A673 (cell line): ENCODE measurements at regions of chr15 and their contacts with region 1.

Region 1: DNA sequence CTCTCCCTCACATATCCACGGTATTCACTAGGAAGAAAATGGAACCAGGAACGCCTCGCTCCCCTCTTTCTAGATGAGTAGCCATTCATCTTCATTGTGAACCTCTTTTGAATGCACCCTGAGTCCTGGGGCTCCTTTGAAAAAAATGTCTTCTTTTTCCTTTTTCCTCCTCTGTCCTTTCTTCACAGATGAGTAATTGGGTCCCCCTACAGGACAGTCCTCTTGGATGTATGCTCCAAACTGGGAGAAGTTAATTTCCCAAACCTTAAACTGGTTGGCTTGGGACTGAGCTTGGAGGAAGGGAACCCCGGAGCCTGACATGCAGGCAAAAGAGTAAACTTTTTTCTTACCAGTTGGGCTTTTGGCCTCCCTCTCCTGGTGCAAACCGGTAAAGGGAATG is 108.8 kb downstream of the DPH6 start:
- DNase-seq: peak; percentile 16
- H3K4me3 ChIP-seq: no peak overlapping the region
- H3K27ac ChIP-seq: no peak overlapping the region
- H3K4me1 ChIP-seq: no peaks in the 10 kb centered on the region
- H3K27me3 ChIP-seq: no peaks in the 10 kb centered on the region
- CTCF ChIP-seq: peak; percentile 27; the same call in 1 of the 2 replicates

Region 2: DNA sequence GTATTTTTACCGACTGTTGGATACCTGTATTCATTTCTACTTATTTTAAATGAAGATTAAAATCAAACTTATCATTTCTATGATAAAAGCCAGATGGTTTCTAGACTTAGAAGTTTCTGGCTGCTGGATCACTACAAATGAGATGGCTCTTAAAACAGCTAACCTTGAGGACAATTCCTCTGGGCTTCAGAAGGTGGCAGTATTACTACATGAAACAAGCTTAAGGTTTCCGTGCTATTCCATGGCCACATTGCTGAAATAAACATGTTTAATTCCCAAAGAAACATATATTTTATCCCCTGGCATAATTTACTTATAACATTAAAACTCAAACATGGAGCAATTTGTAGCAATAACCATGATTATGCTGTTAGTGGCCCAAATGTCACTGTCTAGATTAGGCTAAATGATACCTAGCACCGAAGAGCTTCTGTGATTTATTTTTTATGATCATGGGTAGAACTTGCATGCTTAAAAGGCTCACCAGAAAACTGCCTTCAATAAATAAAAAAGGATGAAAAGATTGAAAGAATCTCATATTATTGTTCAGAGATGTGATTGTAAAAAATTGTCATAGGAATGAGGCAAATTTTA is 148.0 kb before region 1 on chr15:
- CTCF ChIA-PET with region 1: no interaction called
- POLR2A ChIA-PET with region 1: no interaction called
- intact Hi-C with region 1: loop called (anchors 1 kb)
- DNase-seq: peak; percentile 69
- H3K4me3 ChIP-seq: no peak overlapping the region
- H3K27ac ChIP-seq: no peak overlapping the region
- H3K4me1 ChIP-seq: peaks cover 9% of the 10 kb centered on the region
- H3K27me3 ChIP-seq: no peaks in the 10 kb centered on the region
- CTCF ChIP-seq: peak; percentile 84

Region 3: DNA sequence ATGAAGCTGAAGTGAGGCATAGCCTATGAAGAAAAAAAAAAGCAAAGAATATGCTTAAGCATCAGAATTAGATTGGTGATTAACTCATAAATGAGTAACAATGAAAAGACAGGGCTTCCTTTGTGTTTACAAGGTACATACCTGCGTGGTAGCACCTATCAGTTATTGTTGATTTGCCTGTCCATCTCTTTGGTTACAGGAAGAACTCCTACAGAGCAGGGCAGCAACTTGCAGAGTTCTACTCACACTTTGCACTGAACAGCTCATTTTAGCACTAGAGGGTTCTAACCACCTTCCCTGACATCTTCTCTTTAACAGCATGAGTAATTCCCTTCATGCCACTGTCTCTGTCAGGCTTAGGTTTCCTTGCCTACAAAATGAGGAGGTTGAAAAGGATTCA is 57.2 kb before region 1 on chr15:
- CTCF ChIA-PET with region 1: no interaction called
- POLR2A ChIA-PET with region 1: no interaction called
- intact Hi-C with region 1: loop called (anchors 10 kb)
- DNase-seq: no peak
- H3K4me3 ChIP-seq: no peak overlapping the region
- H3K27ac ChIP-seq: no peak overlapping the region
- H3K4me1 ChIP-seq: no peaks in the 10 kb centered on the region
- H3K27me3 ChIP-seq: no peaks in the 10 kb centered on the region
- CTCF ChIP-seq: no peak

Region 4: DNA sequence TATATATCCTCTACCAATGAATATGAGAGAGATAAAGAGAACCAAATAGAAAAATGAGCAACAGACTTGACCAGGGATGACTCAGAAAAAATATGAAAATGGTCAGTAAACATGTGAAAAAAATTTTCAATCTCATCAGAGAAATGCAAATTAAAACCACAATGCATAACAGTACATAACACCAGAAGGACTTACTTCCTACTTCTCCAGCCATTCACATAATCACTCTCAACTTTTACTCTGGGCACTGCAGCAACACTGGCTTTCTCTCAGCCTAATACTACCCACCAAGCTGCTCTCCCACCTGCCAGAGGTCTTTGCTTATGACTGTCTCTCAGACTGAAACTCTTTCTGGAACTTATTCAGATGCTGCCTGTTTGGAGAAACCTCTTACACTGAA is 59.4 kb after region 1 on chr15:
- CTCF ChIA-PET with region 1: no interaction called
- POLR2A ChIA-PET with region 1: no interaction called
- intact Hi-C with region 1: no loop called
- DNase-seq: no peak
- H3K4me3 ChIP-seq: no peak overlapping the region
- H3K27ac ChIP-seq: no peak overlapping the region
- H3K4me1 ChIP-seq: peaks cover 8% of the 10 kb centered on the region
- H3K27me3 ChIP-seq: no peaks in the 10 kb centered on the region
- CTCF ChIP-seq: no peak

Region 5: DNA sequence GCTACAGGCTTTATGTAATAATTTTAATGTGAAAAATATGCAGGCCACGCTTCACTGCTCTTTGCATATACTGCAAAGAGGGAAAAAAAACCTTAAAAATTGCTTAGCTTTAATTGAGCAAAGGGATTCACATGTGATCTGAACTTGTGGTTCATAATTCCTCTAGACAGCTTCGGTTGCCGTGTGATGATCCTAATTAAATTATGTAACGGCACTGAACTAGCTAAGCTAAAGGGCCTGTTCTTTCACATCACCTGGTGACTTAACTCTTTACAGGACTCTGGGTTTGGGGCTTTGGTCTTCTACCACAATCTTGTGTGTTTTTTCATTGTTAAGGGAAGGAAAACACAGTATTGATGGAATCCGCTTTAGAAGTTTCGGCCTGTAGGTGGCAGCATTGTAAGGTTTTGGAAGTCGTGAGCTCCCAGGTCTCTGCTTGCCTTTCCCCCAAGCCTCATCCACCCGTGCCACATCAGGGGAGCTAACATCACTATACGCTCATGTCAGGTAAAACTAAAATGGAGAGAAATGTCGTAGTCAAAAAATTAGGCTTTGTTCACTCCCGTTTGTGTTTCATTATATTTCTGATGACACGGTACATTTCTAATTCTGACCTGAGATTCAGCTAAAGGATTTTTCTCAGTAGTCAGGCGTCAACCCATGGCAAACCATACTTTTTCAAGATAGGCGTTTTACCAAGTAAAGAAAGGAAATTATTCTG is 314.4 kb after region 1 on chr15:
- CTCF ChIA-PET with region 1: no interaction called
- POLR2A ChIA-PET with region 1: no interaction called
- intact Hi-C with region 1: no loop called
- DNase-seq: peak; percentile 86
- H3K4me3 ChIP-seq: peak overlapping the region; percentile 6
- H3K27ac ChIP-seq: no peak overlapping the region
- H3K4me1 ChIP-seq: peaks cover 5% of the 10 kb centered on the region
- H3K27me3 ChIP-seq: no peaks in the 10 kb centered on the region
- CTCF ChIP-seq: peak; percentile 86